ENCODE measurements at regions of chr17 and their contacts with region 1.

Region 1: GRCh38 chr17:58337600-58338453 is 9.2 kb upstream of the TSPOAP1 start:
- DNase-seq: peak; percentile 82
- ATAC-seq: peak; percentile 71
- H3K4me3 ChIP-seq: peak overlapping the region; percentile 3 to 60 (median 5); a peak in 3 of 6 replicates
- H3K27ac ChIP-seq: peak overlapping the region; percentile 24
- H3K4me1 ChIP-seq: peaks cover 62% of the 10 kb centered on the region
- H3K27me3 ChIP-seq: no peaks in the 10 kb centered on the region
- CTCF ChIP-seq: no peak
- EP300 ChIP-seq: no peak
- POLR2A ChIP-seq: no peak
- RAD21 ChIP-seq: no peak

Region 2: GRCh38 chr17:58317421-58318064 is 20.3 kb before region 1 on chr17:
- CTCF ChIA-PET with region 1: no interaction called
- POLR2A ChIA-PET with region 1: interaction called, 12 read pairs
- in situ Hi-C with region 1: no loop called
- intact Hi-C with region 1: no loop called
- DNase-seq: peak; percentile 75
- ATAC-seq: peak; percentile 84
- H3K4me3 ChIP-seq: no peak overlapping the region
- H3K27ac ChIP-seq: no peak overlapping the region
- H3K4me1 ChIP-seq: peaks cover 19% of the 10 kb centered on the region; the same call in 1 of the 2 replicates
- H3K27me3 ChIP-seq: peaks cover 17 to 68% of the 10 kb centered on the region in 2 experiments
- CTCF ChIP-seq: peak; percentile 99
- EP300 ChIP-seq: no peak
- POLR2A ChIP-seq: no peak
- RAD21 ChIP-seq: peak; percentile 96

Measured in HepG2 (cell line).